MCF 10A (cell line): ENCODE measurements at regions of chr12 and their contacts with region 1.

Region 1: DNA sequence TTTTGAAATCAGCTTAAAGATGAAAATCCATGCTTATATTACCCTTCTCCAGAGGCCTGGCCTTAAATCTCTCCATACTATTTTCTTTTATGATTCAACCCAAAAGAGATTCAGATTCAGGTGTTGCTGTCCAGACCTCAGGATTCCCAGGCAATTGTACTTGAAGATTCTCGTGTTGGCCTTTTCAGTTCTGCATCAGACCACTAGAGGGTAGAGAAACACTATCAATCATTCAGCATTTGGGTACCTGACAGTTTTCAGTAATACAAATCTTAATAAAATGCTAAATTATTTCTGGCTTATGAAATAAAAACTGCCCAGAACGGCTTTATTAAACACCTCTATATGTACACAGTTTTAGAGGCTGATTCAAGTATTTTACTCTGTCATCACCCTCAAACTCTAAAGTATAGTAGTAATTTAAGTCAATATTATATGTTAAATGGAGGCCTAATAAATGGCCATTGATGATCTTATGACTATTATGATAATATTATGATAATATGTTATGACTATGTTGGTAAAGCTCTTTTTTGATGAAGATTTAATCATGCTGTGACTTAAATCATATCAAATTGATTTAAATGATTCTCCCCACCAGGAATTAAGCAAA is 301.1 kb downstream of the DUSP6 start:
- DNase-seq: peak; percentile 80
- H3K4me3 Mint-ChIP-seq: no peak overlapping the region
- H3K27ac Mint-ChIP-seq: no peak overlapping the region
- H3K4me1 Mint-ChIP-seq: no peaks in the 10 kb centered on the region
- H3K27me3 Mint-ChIP-seq: no peaks in the 10 kb centered on the region
- CTCF ChIP-seq: peak; percentile 74

Region 2: GRCh38 chr12:89162704-89163261 is 111.6 kb after region 1 on chr12:
- CTCF ChIA-PET with region 1: interaction called, 3 read pairs
- POLR2A ChIA-PET with region 1: no interaction called
- intact Hi-C with region 1: loop called (anchors 2 kb)
- DNase-seq: peak; percentile 99
- H3K4me3 Mint-ChIP-seq: no peak overlapping the region
- H3K27ac Mint-ChIP-seq: no peak overlapping the region
- H3K4me1 Mint-ChIP-seq: peaks cover 17% of the 10 kb centered on the region
- H3K27me3 Mint-ChIP-seq: no peaks in the 10 kb centered on the region
- CTCF ChIP-seq: no peak

Region 3: GRCh38 chr12:89179983-89180382 is 128.8 kb after region 1 on chr12:
- CTCF ChIA-PET with region 1: interaction called, 4 read pairs
- POLR2A ChIA-PET with region 1: no interaction called
- intact Hi-C with region 1: loop called (anchors 2 kb)
- DNase-seq: peak; percentile 100
- H3K4me3 Mint-ChIP-seq: peak overlapping the region; percentile 64
- H3K27ac Mint-ChIP-seq: peak overlapping the region; percentile 78
- H3K4me1 Mint-ChIP-seq: peaks cover 41% of the 10 kb centered on the region
- H3K27me3 Mint-ChIP-seq: no peaks in the 10 kb centered on the region
- CTCF ChIP-seq: no peak

Region 4: DNA sequence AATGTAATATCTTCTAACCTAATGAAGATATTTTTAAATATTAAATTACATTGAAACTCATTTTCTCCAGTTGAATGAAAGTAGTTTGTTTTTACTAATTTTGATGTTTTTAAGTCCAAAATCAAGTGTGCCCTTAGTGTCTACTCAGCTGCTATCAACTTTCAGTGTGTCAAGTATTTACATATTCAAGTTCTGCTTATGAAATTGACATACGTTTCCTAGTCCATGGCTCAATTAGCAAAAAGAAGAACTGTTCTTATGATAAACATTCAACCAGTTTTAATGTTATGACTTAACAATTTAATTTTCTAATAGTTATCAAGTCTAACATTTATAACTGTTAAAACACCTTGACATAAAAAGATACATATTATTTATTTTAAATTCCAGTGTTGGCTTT is 164.0 kb after region 1 on chr12:
- CTCF ChIA-PET with region 1: no interaction called
- POLR2A ChIA-PET with region 1: no interaction called
- intact Hi-C with region 1: no loop called
- DNase-seq: no peak
- H3K4me3 Mint-ChIP-seq: no peak overlapping the region
- H3K27ac Mint-ChIP-seq: no peak overlapping the region
- H3K4me1 Mint-ChIP-seq: peaks cover 53% of the 10 kb centered on the region
- H3K27me3 Mint-ChIP-seq: no peaks in the 10 kb centered on the region
- CTCF ChIP-seq: no peak

Region 5: DNA sequence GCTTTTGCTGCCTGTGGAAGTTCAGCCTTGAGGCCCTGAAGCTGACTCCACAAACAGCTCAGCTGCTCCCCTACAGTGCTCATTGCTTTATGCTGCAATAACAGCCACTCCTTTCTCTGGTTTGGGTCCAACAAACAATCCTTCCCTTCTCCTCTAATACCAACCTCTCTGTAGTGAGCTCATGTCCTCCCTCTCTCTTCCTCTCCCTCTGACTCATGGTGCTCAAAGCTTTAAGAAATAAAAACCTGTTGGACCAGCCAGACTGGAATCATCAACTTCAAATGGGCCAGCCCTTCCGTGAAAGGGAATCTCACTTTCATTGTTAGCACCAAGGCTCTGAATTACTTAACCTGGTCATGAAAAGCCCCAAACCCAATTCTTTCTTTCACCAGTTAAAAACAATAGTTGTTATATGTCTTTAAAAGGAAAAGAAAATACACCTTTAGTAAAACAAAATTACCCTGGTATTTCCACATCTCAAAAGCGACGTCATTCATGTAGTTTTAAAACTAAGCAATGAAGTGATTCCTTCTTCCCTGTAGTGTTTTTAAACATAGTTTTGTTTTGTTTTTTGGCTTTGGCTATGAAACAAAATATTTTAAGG is 174.7 kb after region 1 on chr12:
- CTCF ChIA-PET with region 1: no interaction called
- POLR2A ChIA-PET with region 1: interaction called, 3 read pairs
- intact Hi-C with region 1: loop called (anchors 1 kb)
- DNase-seq: peak; percentile 96
- H3K4me3 Mint-ChIP-seq: peak overlapping the region; percentile 48
- H3K27ac Mint-ChIP-seq: peak overlapping the region; percentile 93
- H3K4me1 Mint-ChIP-seq: peaks cover 30% of the 10 kb centered on the region
- H3K27me3 Mint-ChIP-seq: no peaks in the 10 kb centered on the region
- CTCF ChIP-seq: no peak

Region 6: DNA sequence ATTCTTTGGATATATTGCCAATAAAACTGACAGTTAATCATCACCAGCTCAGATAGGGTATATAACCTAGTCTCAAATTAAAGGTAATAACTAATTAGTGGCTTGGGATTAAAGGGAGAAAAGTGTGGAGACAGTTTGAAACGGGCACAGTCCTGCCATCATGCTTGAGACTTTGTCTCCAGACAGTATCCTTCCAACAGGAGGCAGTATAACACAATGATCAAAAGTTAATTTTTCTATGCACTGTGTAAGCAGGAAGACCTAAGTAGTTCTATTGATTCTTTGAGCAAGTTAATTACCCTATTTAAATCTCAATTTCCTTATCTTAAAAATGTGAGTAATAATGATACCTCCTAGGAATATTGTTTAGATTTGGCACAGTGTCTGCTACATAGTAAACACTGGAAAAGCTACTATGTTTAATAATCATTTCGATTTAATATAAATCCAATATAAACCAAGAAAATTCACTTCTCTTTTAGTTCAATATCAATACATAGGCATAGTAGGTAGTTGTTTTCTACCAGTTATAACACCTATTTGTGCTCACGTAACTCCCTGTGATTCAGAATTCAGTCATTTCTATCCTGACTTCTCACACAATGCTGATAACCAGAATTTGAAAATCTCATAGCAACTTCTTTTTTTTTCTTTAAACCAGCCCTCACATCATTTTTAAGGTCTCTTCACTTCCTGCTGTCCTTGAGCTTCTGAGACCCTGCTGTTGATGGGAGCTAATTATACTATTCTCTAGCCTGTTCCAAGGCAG is 419.8 kb after region 1 on chr12:
- CTCF ChIA-PET with region 1: interaction called, 12 read pairs
- POLR2A ChIA-PET with region 1: interaction called, 5 read pairs
- intact Hi-C with region 1: no loop called
- DNase-seq: peak; percentile 47
- H3K4me3 Mint-ChIP-seq: no peak overlapping the region
- H3K27ac Mint-ChIP-seq: no peak overlapping the region
- H3K4me1 Mint-ChIP-seq: peaks cover 14% of the 10 kb centered on the region
- H3K27me3 Mint-ChIP-seq: no peaks in the 10 kb centered on the region
- CTCF ChIP-seq: peak; percentile 49

Region 7: DNA sequence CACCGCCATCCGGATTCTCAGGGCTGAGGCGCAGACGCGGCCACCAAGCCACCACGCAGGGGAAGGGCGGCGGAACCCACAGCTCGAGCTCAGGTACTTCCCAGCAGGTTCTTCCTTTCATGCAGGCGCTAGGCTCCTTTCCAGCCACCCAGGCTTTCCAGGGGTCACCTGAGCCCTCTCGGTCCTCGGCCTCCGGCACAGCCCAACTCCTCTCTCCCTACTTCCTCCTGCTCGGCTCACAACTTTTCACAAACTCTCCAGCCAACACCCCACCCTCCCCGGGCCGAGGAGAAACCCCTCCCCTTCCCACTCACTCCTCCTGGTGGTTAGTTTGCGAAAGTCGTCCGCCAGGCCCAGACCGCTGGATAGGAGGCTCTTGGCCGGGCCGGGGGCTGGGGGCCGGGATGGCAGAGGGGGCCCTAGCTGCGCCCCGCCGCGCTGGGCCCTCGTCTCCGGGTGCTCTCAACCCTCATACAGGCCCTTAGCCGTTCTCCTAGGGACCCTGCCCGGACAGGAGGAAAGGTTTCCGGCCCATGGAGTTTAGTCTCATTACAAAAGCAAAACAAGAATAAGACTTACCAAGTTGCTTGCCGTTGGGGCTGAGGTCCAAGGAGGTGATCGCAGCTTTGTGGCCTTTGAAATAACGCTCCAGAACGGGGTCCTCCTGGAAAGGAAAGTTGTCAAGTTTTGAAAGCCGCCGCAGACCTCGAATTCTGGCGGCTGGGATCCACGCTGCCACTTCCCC is 473.5 kb after region 1 on chr12 and contains the start of gene GALNT4:
- CTCF ChIA-PET with region 1: interaction called, 9 read pairs
- POLR2A ChIA-PET with region 1: interaction called, 5 read pairs
- intact Hi-C with region 1: loop called (anchors 1 kb)
- DNase-seq: peak; percentile 91
- H3K4me3 Mint-ChIP-seq: peak within 1 kb of the TSS; percentile 99
- H3K27ac Mint-ChIP-seq: peak within 1 kb of the TSS; percentile 79
- H3K4me1 Mint-ChIP-seq: peaks cover 29% of the 10 kb centered on the region
- H3K27me3 Mint-ChIP-seq: no peaks in the 10 kb centered on the region
- CTCF ChIP-seq: peak; percentile 73
- total RNA-seq, gene GALNT4: 2.6 and 2.8 TPM in 2 replicates

Region 8: DNA sequence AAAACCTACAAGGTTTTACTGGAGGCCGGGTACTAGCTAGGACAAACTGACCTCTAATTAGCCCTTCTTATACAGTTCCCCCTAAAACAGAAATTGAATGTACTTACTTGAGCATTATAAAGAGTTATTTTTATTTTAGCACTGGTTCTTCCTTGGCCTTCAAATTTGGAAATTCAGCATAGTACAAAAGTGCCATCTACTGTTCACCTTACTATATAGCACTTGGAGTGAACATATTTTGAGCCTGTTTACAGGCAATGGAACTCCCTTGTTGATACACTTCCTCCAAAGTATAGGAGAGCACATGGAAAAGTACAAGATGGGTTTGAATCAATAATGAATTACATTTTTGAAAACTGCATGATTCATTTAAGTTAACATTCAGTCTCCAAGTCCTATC is 478.6 kb after region 1 on chr12:
- CTCF ChIA-PET with region 1: interaction called, 9 read pairs
- POLR2A ChIA-PET with region 1: interaction called, 5 read pairs
- intact Hi-C with region 1: loop called (anchors 1 kb)
- DNase-seq: peak; percentile 54
- H3K4me3 Mint-ChIP-seq: no peak overlapping the region
- H3K27ac Mint-ChIP-seq: no peak overlapping the region
- H3K4me1 Mint-ChIP-seq: no peaks in the 10 kb centered on the region
- H3K27me3 Mint-ChIP-seq: no peaks in the 10 kb centered on the region
- CTCF ChIP-seq: peak; percentile 72